GM12878 (cell line): ENCODE measurements at regions of chr2 and their contacts with region 1.

Region 1: DNA sequence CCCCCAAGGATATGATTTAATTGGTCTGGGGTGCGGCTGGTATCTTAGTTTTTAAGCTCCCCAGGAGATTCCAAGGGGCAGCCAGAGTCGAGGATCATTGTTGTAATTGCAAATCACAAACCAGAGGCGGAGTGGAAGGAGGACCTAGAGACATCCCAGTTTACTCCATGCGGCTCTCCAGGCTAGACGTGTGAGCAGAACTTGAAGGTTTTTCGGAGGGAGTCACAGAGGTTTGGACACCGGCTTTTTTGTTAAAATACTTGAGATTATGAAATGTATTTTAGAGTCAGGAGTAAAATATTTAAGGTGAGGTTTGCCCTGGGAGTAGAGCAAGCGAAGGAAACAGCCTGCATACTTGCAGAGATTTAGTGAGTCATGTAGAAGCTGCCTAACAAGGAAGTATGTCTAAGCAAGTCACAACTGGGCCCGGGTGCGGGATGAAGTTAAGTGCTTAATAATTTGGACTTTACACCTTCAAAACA is 39.5 kb downstream of the TGOLN2 start:
- DNase-seq: no peak
- ATAC-seq: no peak
- H3K4me3 ChIP-seq: no peak overlapping the region
- H3K27ac ChIP-seq: no peak overlapping the region
- H3K4me1 ChIP-seq: no peaks in the 10 kb centered on the region; the same call in 1 of the 2 replicates
- H3K27me3 ChIP-seq: no peaks in the 10 kb centered on the region; a peak in 1 of 4 replicates
- CTCF ChIP-seq: no peak
- EP300 ChIP-seq: no peak
- POLR2A ChIP-seq: no peak
- RAD21 ChIP-seq: no peak

Region 2: GRCh38 chr2:85132834-85133637 is 155.2 kb before region 1 on chr2 and contains the start of gene TCF7L1:
- CTCF ChIA-PET with region 1: no interaction called
- POLR2A ChIA-PET with region 1: no interaction called
- RAD21 ChIA-PET with region 1: interaction called, 3 read pairs
- SMC1A ChIA-PET with region 1: no interaction called
- in situ Hi-C with region 1: no loop called
- intact Hi-C with region 1: loop called (anchors 5 kb)
- DNase-seq: no peak
- ATAC-seq: peak; percentile 85
- H3K4me3 ChIP-seq: peak within 1 kb of the TSS; percentile 41; the same call in 1 of the 2 replicates
- H3K27ac ChIP-seq: no peak within 1 kb of the TSS
- H3K4me1 ChIP-seq: no peaks in the 10 kb centered on the region
- H3K27me3 ChIP-seq: peaks cover 8 to 14% of the 10 kb centered on the region in 2 experiments
- CTCF ChIP-seq: peak; percentile 21 to 34 (median 21); a peak in 5 of 6 replicates
- EP300 ChIP-seq: no peak
- POLR2A ChIP-seq: no peak
- RAD21 ChIP-seq: no peak
- polyA plus RNA-seq, gene TCF7L1: not detected

Region 3: GRCh38 chr2:85170938-85171475 is 117.3 kb before region 1 on chr2:
- CTCF ChIA-PET with region 1: no interaction called
- POLR2A ChIA-PET with region 1: no interaction called
- RAD21 ChIA-PET with region 1: no interaction called
- SMC1A ChIA-PET with region 1: no interaction called
- in situ Hi-C with region 1: no loop called
- intact Hi-C with region 1: no loop called
- DNase-seq: no peak
- ATAC-seq: no peak
- H3K4me3 ChIP-seq: no peak overlapping the region
- H3K27ac ChIP-seq: no peak overlapping the region
- H3K4me1 ChIP-seq: no peaks in the 10 kb centered on the region
- H3K27me3 ChIP-seq: peaks cover 0 to 3% of the 10 kb centered on the region in 2 experiments; a peak in 2 of 4 replicates
- CTCF ChIP-seq: no peak
- EP300 ChIP-seq: no peak
- POLR2A ChIP-seq: no peak
- RAD21 ChIP-seq: no peak